Psoas muscle (tissue), 8 donors: ENCODE measurements at regions of chr1 and their contacts with region 1.

Region 1: DNA sequence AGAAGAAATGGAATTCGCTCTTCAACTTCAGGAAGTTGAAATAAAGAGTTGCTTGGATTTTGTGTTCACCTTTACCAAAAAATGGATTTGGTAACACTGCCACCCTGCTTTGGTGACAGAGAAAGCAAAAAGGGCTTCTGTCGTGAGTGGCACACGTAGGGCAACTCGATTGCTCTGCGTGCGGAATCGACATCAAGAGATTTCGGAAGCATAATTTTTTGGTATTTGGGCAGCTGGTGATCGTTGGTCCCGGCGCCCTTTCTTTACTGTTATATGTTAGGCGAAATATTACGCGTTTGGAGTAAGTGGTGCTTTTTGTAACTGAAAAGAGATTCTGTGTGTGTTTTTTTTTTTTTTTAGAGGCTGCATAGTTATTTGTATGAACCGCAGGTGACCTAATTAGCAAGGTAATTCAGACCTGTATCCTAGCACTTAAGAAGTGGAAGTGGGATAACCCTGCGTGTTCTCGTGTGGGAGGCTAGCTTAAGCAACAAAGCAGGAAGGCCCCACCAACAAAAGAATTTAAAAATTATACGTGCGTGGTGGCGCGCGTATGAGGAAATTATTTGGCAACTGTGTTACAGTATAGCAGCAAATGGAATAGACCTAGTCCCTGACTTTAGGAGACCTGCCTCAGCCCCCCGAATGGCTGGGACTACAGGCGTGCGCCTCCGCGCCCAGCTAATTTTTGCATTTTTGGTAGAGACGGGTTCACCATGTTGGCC is at the start of gene RNU11:
- DNase-seq: peak; percentile 80 to 92
- ATAC-seq: peak; percentile 79 to 84 (median 83)
- H3K4me3 ChIP-seq: peak within 1 kb of the TSS; percentile 64
- H3K27ac ChIP-seq: peak within 1 kb of the TSS; percentile 92
- H3K4me1 ChIP-seq: peaks cover 28% of the 10 kb centered on the region
- H3K27me3 ChIP-seq: no peaks in the 10 kb centered on the region
- CTCF ChIP-seq: no peak
- total RNA-seq, gene RNU11: not detected

Region 2: GRCh38 chr1:28273216-28273860 is 375.3 kb before region 1 on chr1:
- intact Hi-C with region 1: no loop called
- DNase-seq: no peak
- ATAC-seq: no peak
- H3K4me3 ChIP-seq: no peak overlapping the region
- H3K27ac ChIP-seq: no peak overlapping the region
- H3K4me1 ChIP-seq: no peaks in the 10 kb centered on the region
- H3K27me3 ChIP-seq: no peaks in the 10 kb centered on the region
- CTCF ChIP-seq: no peak

Region 3: DNA sequence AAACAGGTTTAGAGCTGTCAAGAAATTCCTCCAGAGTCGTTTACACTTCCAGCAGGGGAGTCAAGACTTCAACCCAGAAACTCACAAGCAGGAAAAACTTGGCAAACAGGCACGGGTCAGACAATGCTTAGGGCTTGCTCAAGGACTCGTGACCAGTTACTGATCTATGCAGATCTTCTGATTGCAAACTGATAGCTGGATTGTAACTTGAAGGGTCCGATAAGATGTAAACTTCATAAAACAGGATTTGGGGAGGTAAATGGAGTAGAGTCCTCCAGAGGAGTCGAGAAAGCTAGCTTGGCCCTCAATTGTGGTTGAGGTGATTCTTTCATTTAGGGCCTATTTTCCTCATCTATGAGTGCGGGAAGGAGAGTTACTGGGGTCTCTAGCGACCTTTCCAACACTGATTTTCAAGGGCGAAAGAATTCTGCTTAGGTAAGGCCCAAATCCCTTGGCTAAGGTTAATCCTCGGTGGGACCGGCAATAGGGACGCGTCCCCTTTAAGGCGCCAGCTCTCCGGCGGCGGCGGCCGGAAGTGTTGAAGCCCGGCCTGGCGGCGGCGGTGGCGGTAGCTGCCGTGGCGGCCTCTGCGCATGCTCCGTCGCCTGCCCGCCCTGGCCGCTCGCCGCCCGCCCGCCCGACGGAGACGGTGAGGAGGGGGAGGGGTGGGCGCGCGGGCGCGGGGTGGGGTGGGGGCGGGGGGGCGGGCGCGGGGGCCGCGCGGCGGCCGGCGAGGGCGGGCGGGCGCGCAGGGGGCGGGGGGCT is 19.7 kb after region 1 on chr1 and contains the start of gene GMEB1:
- intact Hi-C with region 1: loop called in 1 of 2 experiments (anchors 2 kb)
- DNase-seq: peak; percentile 87 to 95
- ATAC-seq: peak; percentile 91 to 95 (median 94)
- H3K4me3 ChIP-seq: peak within 1 kb of the TSS; percentile 82
- H3K27ac ChIP-seq: peak within 1 kb of the TSS; percentile 99
- H3K4me1 ChIP-seq: peaks cover 5% of the 10 kb centered on the region
- H3K27me3 ChIP-seq: no peaks in the 10 kb centered on the region
- CTCF ChIP-seq: no peak
- total RNA-seq, gene GMEB1: 8.4 to 12.8 (median 10.0) TPM

Region 4: DNA sequence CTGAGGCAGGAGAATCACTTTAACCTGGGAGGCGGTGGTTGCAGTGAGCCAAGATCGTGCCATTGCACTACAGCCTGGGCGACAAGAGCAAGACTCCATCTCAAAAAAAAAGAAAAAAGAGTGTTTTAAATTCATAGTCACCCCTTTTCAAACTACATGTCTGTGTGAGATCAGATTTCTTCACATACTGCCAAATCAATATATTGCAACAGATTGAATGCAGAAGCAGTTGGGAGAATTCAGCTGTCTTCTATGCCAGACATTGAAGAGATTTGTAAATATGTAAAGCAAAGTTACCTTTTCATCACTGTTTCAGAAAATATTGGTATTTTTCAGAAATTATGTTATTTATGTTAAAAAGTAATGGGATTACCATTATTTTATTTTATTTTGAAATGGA is 374.0 kb after region 1 on chr1:
- intact Hi-C with region 1: no loop called
- DNase-seq: no peak
- ATAC-seq: no peak
- H3K4me3 ChIP-seq: no peak overlapping the region
- H3K27ac ChIP-seq: no peak overlapping the region
- H3K4me1 ChIP-seq: no peaks in the 10 kb centered on the region
- H3K27me3 ChIP-seq: no peaks in the 10 kb centered on the region
- CTCF ChIP-seq: no peak